Activated CD4-positive, alpha-beta T cell treated with anti-CD3 and anti-CD28 coated beads for 36 hours (primary cell): ENCODE measurements at regions of chr3 and their contacts with region 1.

Region 1: DNA sequence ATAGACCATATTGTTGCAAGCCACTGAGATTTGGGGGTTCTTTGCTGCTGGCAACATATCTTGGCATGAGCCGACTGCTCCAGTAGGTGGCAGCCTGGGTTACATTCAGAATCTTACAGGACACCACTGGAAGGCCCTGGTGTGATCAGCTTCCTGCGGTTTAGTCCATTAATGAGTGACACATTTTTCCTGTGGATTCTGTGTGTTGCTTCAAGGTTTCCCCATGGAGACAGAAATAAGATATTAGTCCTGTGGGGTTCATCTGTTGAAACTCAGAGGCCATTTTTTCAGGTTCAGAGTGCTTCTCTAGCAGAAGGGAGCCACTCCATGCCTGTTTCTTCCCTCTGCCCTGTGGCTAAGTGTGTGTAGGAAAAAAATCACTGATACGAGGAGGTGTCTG is 116.2 kb downstream of the MFSD1 start:
- DNase-seq: peak; percentile 39
- ATAC-seq: peak; percentile 57
- H3K4me3 Mint-ChIP-seq: no peak overlapping the region
- H3K27ac Mint-ChIP-seq: no peak overlapping the region
- H3K4me1 Mint-ChIP-seq: no peaks in the 10 kb centered on the region
- H3K27me3 Mint-ChIP-seq: peaks cover 5% of the 10 kb centered on the region

Region 2: DNA sequence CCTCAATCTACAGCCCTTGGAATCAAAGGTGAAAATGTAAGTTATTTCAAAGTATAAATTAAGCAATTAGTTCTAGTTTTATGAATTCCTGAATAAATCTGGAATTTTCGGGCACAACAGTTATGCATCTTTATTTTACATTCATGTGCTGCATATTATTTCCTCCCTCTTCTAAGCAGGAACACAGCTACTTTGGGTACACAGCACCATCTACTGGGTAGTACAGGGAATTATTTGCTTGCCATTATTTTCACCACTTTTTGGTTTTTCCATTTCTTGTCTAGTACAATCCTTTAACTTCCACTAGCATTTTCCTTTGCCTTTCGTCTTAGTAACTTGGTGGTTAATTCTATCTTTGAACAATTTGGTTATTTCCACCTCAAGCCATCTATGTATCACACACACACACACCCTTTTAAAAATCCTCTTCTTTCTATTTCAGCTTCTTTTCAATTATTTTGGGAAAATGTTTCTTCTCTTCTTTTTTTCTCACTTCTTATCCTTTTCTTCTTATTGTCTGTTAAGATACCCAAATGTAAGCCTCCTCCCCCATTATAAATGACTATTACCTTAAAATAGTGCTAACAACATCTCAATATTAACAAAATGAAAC is 334.9 kb after region 1 on chr3:
- CTCF ChIA-PET with region 1: no interaction called
- POLR2A ChIA-PET with region 1: no interaction called
- intact Hi-C with region 1: loop called in 1 of 2 experiments (anchors 2 kb)
- DNase-seq: no peak
- ATAC-seq: no peak
- H3K4me3 Mint-ChIP-seq: no peak overlapping the region
- H3K27ac Mint-ChIP-seq: no peak overlapping the region
- H3K4me1 Mint-ChIP-seq: no peaks in the 10 kb centered on the region
- H3K27me3 Mint-ChIP-seq: peaks cover 8% of the 10 kb centered on the region

Region 3: GRCh38 chr3:159260049-159260662 is 342.1 kb after region 1 on chr3:
- CTCF ChIA-PET with region 1: interaction called, 6 read pairs
- POLR2A ChIA-PET with region 1: no interaction called
- intact Hi-C with region 1: loop called (anchors 1 kb)
- DNase-seq: peak; percentile 56
- ATAC-seq: no peak
- H3K4me3 Mint-ChIP-seq: no peak overlapping the region
- H3K27ac Mint-ChIP-seq: no peak overlapping the region
- H3K4me1 Mint-ChIP-seq: no peaks in the 10 kb centered on the region
- H3K27me3 Mint-ChIP-seq: peaks cover 3% of the 10 kb centered on the region